Ascending aorta (tissue), 2 donors: ENCODE measurements at regions of chr19 and their contacts with region 1.

Region 1: GRCh38 chr19:18571564-18572300 is at the start of gene UBA52:
- DNase-seq: peak; percentile 92 to 99
- H3K4me3 ChIP-seq: peak within 1 kb of the TSS; percentile 74 to 83
- H3K27ac ChIP-seq: peak within 1 kb of the TSS; percentile 84 to 95
- H3K4me1 ChIP-seq: peaks cover 11 to 15% of the 10 kb centered on the region in 2 donors
- H3K27me3 ChIP-seq: no peaks in the 10 kb centered on the region
- CTCF ChIP-seq: no peak
- total RNA-seq, gene UBA52: 554 TPM

Region 2: DNA sequence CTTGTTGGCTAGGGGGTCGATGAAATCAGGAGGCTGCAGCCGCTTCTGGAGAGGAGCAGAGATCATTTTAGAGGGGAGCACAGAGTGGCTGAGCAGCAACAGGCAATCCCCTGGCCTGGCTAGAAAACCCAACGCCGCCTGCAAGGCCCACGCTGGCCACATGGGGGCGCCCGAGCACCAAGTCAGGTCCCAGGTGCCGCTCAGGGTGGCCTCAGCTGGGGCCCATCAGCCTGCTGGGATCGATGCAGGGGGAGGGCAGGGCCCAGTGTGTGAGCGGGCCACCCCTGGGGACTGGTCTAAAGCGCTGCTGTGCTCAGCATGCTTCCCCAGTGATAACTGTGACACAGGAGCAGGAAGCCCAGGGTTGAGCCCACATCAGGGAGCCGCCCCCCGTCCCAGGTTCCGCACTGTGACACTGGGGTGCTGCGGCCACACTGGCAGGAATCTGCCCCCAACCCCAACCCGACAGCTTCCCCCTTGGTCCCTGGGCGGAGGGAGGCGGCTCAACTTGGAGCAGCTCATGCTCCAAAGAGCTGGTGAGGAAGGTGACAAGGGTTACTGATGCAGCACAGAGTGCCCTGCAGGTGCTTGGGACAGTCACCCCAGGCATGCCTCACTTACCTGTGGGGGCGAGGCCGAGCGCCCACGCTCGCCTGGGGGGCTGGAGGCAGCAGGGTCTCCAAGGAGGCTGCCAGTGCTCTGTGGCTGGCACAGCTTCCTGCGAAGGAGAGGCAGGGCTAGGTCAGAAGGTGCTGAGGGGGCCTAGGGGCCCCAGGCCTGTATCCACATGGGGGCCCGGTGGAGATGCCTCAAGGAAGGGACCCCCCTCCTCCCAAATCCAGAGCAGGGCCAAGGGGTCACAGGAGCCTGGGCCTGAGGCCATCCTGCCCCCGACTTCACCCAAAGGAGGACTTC is 120.5 kb before region 1 on chr19:
- intact Hi-C with region 1: loop called (anchors 5 kb)
- DNase-seq: peak in 1 of 2 donors; percentile 93
- H3K4me3 ChIP-seq: no peak overlapping the region
- H3K27ac ChIP-seq: peak overlapping the region in 1 of 2 donors; percentile 22
- H3K4me1 ChIP-seq: peaks cover 3 to 7% of the 10 kb centered on the region in 2 donors
- H3K27me3 ChIP-seq: no peaks in the 10 kb centered on the region
- CTCF ChIP-seq: peak; percentile 95 to 99 (median 95)

Region 3: DNA sequence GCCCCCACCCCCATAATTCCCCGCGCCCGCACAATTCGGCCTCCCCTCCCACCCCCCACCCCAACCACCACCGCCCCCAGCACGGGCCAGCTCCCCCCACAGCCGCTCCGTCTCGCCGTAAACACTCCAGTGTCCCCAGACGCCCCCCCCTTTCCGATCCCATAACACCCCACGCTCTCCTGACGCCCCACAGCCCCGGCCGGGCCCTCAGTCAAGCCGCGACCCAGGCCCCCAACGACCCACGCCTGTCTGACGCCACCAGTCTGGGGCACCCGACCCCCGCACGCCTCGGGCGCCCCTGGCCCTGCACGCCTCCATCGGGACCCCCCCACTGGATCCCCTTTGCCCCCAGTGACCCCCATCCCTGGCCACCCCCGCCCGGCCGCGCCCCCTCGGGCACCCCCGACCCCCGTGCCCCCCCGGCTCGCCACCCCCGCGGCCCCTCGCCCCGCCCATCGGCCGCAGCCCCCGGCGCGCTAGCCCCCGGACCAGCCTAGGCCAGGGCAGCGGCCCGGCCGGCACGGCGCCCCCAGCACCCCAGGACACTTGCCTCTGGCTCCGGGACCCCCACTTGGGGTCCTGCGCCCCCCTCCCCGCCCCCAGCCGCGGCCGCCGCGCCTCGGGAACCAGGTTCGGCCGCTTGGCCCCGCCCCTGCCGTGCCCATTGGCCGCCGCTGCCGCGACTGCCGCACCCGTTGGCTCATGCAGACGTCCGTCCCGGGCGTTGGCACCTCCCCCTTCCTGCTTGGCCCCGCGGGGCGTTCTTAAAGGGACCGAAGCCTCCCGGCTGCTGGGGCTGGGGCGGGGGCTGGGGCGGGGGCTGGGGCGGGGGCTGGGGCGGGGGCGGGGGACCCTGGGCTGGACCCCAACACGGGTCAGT is 28.6 kb before region 1 on chr19 and contains the start of gene FKBP8:
- intact Hi-C with region 1: loop called (anchors 1 kb)
- DNase-seq: peak; percentile 70 to 96
- H3K4me3 ChIP-seq: peak within 1 kb of the TSS; percentile 70 to 85
- H3K27ac ChIP-seq: peak within 1 kb of the TSS; percentile 87 to 88
- H3K4me1 ChIP-seq: peaks cover 4 to 10% of the 10 kb centered on the region in 2 donors
- H3K27me3 ChIP-seq: no peaks in the 10 kb centered on the region
- CTCF ChIP-seq: no peak
- total RNA-seq, gene FKBP8: 395 TPM

Region 4: GRCh38 chr19:18557474-18558201 is 14.1 kb before region 1 on chr19 and contains the start of gene KXD1:
- intact Hi-C with region 1: loop called (anchors 1 kb)
- DNase-seq: peak; percentile 95 to 99
- H3K4me3 ChIP-seq: peak within 1 kb of the TSS; percentile 79 to 95
- H3K27ac ChIP-seq: peak within 1 kb of the TSS; percentile 98
- H3K4me1 ChIP-seq: peaks cover 5 to 34% of the 10 kb centered on the region in 2 donors
- H3K27me3 ChIP-seq: no peaks in the 10 kb centered on the region
- CTCF ChIP-seq: no peak
- total RNA-seq, gene KXD1: 178 TPM

Region 5: DNA sequence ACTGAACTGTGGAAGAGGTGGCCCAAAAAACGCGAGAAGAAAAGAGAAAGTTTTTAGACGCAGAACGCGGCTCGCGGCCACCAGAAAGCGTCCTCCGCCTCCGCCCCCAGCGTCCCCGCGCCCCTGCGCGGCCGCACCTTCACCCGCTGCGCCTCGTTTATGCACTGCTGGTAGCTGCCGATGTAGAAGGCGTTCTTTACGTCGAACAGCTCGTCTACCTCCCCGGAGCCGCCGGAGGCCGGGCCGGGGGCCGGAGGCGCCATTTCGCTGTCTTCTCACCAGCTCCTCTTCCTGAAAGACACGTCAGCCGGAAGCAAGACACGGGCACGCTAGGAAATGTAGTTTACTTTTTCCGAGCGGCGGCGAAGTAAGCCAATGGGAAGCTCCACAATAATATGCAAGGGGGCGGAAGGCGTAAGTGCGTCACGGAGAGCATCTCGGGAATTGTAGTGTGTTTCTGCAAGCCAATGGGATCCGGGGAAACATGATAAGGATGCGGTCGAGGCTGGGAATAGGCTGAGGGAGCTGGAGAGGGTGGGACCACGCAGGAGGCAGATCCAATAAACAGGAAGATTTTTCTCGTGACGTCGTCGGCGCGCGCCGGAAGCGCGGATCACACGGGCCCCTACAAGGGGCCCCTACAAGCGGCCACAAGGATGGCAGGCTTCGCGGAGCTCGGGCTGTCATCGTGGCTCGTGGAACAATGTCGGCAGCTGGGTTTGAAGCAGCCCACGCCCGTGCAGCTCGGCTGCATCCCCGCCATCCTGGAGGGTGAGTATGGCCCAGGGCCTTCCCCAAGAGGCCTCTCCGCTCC is 347.6 kb after region 1 on chr19 and contains the starts of genes COPE and DDX49:
- intact Hi-C with region 1: loop called (anchors 1 kb)
- DNase-seq: peak; percentile 98 to 100
- H3K4me3 ChIP-seq: peak within 1 kb of the TSS; percentile 88 to 98
- H3K27ac ChIP-seq: peak within 1 kb of the TSS; percentile 91 to 97
- H3K4me1 ChIP-seq: peaks cover 6 to 22% of the 10 kb centered on the region in 2 donors
- H3K27me3 ChIP-seq: no peaks in the 10 kb centered on the region
- CTCF ChIP-seq: no peak
- total RNA-seq, gene COPE: 331 TPM
- total RNA-seq, gene DDX49: 51.6 TPM

Region 6: GRCh38 chr19:19697589-19697988 is 1125.9 kb after region 1 on chr19:
- intact Hi-C with region 1: no loop called
- DNase-seq: no peak
- H3K4me3 ChIP-seq: no peak overlapping the region
- H3K27ac ChIP-seq: no peak overlapping the region
- H3K4me1 ChIP-seq: no peaks in the 10 kb centered on the region
- H3K27me3 ChIP-seq: no peaks in the 10 kb centered on the region
- CTCF ChIP-seq: no peak